Sigmoid colon (tissue), 7 donors: ENCODE measurements at regions of chr1 and their contacts with region 1.

Region 1: DNA sequence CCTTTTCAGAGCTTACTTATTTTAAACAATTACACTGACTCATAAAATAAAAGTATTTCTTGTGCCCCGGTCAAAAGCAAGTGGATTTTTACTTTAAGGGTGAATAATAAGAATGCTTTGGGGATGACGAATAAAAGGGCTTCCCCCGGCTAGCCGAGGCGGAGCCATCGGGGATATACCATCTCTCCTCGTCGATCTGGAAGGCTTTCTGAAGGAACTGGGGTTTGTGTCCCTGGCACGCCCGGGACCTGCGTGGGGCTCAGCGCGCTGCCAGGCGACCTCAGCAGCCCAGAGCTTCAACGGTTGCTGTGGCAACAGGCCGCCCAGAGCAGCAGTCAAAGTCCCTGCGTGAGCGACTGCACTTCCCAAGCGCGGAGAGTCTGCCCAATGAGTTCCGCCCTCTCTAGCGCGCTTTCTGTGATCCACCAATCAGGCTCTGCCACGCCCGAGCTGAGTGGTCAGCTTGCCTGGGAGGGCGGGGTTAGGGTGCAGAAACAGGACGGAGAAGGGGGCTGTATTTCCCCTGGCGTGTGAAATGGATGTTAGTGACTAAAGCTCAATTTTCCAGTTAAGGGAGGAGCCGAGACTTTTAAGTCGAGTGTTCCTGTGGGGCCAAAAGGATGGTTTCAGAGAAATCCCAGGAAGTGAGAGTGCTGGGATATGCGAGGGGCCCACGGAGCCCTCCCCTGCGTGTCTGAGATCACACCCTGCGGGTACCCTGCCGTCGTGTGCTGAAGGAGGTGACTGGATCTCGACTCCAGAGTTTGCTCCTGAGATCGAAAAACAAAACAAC is 33.0 kb upstream of the MGST3 start:
- DNase-seq: peak; percentile 98
- H3K4me3 ChIP-seq: peak overlapping the region; percentile 50 to 57 (median 53)
- H3K27ac ChIP-seq: peak overlapping the region; percentile 66 to 76 (median 74)
- H3K4me1 ChIP-seq: peaks cover 0 to 12% (median 5%) of the 10 kb centered on the region in 4 donors
- H3K27me3 ChIP-seq: peaks cover 0 to 11% (median 0%) of the 10 kb centered on the region in 3 donors
- CTCF ChIP-seq: no peak
- EP300 ChIP-seq: no peak
- POLR2A ChIP-seq: peak in 1 of 2 donors; percentile 39

Region 2: DNA sequence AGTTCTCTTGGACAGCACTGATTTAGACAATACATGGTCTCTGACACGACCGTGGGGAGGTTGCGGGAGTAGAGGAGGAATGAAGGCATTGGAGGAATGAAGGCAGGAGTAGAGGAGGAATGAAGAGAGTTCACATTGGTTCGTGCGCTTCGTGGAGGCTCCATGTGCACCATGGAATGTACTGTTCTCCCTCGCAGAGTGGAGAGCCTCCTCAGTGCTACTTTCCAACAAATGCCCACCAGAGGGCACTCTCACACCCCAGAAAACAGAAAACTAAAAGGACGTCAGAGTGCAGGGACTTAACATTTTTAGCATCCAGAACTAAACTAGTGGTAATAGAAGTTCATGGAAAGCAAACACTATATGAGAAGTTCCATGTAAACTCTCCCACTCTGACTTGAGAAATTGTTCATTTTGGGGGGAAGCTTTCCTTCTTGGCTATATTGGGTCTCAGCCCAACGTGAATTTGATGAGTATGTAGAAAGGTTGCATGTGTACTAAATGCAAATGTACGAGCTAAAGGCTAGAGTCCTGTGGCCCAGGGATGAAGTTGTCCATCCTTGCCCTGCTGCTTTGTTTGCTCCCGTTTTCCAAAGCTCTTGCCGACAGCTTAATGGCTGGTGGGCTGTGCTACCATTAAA is 453.2 kb before region 1 on chr1:
- intact Hi-C with region 1: loop called (anchors 2 kb)
- DNase-seq: no peak
- H3K4me3 ChIP-seq: no peak overlapping the region
- H3K27ac ChIP-seq: no peak overlapping the region
- H3K4me1 ChIP-seq: no peaks in the 10 kb centered on the region
- H3K27me3 ChIP-seq: peaks cover 0 to 15% (median 0%) of the 10 kb centered on the region in 3 donors
- CTCF ChIP-seq: peak in 3 of 4 experiments; percentile 19 to 71 (median 28)
- EP300 ChIP-seq: no peak
- POLR2A ChIP-seq: no peak

Region 3: DNA sequence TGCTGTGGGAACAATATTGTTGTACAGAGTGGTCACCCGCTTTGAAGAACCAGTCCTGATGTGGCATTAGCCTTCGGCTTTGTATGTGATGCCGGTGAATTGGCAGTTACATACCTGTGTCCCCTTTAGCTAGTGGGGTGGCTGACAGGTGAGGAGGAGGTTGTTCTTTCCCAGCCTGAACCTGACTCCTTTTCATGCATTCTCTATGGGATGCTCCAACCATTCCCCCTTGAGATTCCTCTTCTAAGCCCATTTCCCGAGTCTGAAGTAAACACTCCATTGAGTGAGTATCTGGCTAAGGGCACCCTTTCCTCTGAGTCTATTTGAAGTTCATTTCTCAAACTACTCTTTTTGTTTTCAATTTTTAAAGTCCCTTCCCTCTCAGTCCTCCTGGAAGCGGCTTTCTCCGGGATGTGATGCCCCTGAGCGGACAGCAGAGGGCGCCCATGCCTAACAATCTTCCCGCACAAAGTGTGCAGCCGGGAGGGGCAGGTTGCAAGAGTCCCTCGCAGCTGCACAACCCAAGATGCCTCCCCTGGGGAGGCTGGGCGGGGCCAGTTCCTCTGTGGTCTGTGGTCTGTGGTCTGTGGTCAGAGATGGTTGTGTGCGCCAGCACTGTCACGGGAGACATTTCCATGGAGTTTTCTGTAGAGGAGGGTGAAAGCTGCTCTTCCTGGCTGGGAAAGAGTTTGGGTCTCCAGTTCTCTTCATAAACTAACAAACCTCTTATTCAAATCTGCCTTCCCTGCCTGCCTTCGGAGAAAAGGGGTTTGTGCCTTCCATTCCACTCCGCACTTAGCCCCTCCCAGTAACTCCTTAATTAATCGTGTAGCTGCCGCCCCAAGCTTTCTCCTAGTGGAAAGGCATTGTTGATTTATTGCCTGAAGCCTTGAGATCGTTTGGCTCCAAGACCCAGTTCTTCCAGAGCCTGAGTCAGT is 205.2 kb before region 1 on chr1:
- intact Hi-C with region 1: loop called (anchors 1 kb)
- DNase-seq: peak; percentile 92
- H3K4me3 ChIP-seq: peak overlapping the region in 3 of 4 donors; percentile 5 to 24 (median 23)
- H3K27ac ChIP-seq: peak overlapping the region in 1 of 4 donors; percentile 47
- H3K4me1 ChIP-seq: peaks cover 0 to 8% (median 6%) of the 10 kb centered on the region in 4 donors
- H3K27me3 ChIP-seq: no peaks in the 10 kb centered on the region
- CTCF ChIP-seq: peak; percentile 66 to 95 (median 80)
- EP300 ChIP-seq: no peak
- POLR2A ChIP-seq: no peak

Region 4: DNA sequence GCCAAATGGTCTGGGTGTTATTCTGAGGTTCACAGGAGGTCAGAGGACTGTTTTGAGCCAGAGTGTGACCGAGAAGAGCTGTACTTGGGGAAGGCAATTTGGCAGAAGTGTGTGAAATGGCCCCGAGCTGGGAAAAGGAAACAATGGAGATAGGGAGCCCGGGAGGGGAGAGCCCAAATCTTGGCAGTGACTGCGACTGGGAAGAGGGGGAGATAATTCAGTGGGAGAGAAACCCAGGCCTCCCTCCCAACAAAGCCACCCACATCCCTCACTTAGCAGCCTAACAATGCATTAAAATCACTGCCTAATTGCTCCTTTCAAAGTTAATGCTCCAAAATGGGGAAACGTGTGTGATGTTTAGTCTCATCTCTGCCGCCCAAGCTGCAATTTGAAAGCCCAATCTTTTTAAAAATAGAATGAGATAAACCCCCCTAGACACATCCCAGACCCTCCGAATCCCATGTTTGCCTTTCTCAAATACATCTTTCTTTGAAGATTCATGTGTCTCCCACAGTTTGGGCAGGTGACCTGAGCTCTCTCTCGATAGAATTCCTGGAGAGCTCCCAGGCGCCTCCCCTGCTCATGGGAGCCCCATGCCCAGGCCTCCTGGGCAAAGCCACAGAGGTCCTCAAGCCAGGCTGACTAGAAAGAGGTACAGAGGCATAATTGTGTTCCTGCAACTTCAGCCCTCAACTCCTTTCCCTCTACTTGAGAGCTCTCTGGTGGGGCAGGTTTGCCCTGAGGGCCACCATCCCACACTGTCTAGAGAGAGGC is 37.0 kb before region 1 on chr1:
- intact Hi-C with region 1: no loop called
- DNase-seq: no peak
- H3K4me3 ChIP-seq: no peak overlapping the region
- H3K27ac ChIP-seq: no peak overlapping the region
- H3K4me1 ChIP-seq: no peaks in the 10 kb centered on the region
- H3K27me3 ChIP-seq: no peaks in the 10 kb centered on the region
- CTCF ChIP-seq: no peak
- EP300 ChIP-seq: no peak
- POLR2A ChIP-seq: no peak

Region 5: DNA sequence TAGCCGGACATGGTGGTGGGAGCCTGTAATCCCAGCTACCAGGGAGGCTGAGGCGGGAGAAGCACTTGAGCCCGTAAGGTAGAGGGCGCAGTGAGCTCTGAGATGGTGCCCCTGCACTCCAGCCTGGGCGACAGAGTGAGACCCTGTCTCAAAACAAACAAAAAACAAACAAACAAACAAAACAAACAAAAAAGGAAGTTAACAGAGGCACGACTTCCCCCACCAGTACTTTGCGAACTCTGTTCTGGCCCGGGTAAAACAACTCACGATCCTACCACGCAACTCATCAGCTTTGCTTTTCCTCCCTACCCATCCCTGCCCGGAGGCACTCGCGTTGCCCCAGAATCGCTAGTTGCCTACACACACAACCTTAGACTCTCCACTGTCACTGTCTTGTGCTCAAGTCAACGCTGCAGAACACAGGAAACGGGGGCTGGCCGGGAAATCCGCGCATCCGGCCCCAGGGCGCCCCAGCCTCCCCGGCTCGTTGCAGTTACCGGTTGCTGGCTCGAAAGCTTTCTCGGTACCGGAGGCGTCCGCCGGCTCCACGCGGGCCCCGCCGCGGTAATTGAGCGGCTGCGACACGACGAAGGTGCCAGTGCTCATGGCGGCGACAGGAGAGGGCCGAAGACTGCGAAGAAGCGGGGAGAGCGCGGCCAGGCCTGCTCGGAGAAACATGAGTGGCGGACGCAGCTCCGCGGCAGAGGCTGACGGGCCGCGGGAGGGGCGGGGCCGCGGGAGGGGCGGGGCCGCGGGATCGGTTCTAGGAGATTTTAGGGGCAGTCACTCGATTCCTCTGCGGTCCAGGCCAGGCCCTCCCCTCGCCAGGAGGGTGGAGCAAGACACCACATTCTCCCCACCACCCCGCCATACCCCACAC is 100.0 kb after region 1 on chr1 and contains the start of gene ALDH9A1:
- intact Hi-C with region 1: loop called (anchors 5 kb)
- DNase-seq: peak; percentile 95
- H3K4me3 ChIP-seq: peak within 1 kb of the TSS; percentile 66 to 79 (median 70)
- H3K27ac ChIP-seq: peak within 1 kb of the TSS; percentile 91 to 97 (median 94)
- H3K4me1 ChIP-seq: peaks cover 0 to 32% (median 23%) of the 10 kb centered on the region in 4 donors
- H3K27me3 ChIP-seq: no peaks in the 10 kb centered on the region
- CTCF ChIP-seq: peak in 3 of 4 experiments; percentile 12 to 46 (median 36)
- EP300 ChIP-seq: no peak
- POLR2A ChIP-seq: peak; percentile 64 to 78
- total RNA-seq, gene ALDH9A1: 59.4 to 98.5 (median 86.9) TPM

Region 6: DNA sequence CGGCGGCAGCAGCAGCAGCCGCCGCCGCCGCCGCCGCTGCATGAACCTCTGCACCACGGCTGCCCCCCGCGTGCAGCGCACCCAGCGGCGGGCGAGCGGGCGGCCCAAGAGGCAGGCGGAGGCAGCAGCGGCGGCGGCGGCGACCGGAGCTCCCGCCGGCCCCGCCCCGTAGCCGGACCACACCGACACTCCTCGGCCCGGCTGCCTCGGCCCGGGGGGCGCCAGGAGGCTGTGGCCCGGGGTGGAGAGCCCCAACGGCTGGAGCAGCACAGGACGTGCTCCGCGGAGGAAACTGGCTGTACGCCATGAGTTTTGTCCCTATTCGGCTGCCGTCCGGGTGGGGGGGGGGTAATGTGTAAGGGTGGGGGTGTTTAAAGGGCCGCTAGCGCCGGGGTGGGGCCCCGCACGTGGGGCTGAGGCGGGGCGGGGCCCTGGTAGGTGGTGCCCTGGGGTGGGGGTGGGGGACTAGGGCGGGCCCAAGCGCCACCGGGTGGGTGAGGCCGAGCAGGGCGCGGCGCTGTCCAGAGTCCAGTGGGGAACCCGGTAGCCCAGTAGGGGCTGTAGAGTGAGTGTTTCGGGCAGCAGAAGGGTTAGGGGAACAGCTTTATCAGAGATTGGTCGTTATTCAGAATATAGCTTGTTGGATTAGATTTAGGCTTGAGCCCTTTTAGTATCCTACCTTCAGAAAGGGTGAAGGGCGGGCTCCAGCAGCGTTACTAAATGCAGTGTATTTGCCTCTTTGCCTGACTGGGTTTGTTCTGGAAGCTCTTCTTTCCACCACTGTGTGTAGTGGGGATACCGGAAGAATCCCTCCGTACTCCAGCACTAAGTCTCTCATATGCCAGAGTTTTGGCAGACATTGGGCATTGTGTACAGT is 568.9 kb after region 1 on chr1 and contains the start of gene FAM78B:
- intact Hi-C with region 1: loop called (anchors 10 kb)
- DNase-seq: peak; percentile 91
- H3K4me3 ChIP-seq: peak within 1 kb of the TSS; percentile 46 to 79 (median 74)
- H3K27ac ChIP-seq: peak within 1 kb of the TSS; percentile 56 to 83 (median 73)
- H3K4me1 ChIP-seq: peaks cover 0 to 27% (median 21%) of the 10 kb centered on the region in 4 donors
- H3K27me3 ChIP-seq: no peaks in the 10 kb centered on the region
- CTCF ChIP-seq: no peak
- EP300 ChIP-seq: no peak
- POLR2A ChIP-seq: no peak
- total RNA-seq, gene FAM78B: 2.0 to 5.4 (median 3.1) TPM